CD4-positive, alpha-beta memory T cell (primary cell): ENCODE measurements at regions of chr2 and their contacts with region 1.

Region 1: GRCh38 chr2:231780909-231781797 is at the start of gene PDE6D:
- DNase-seq: peak; percentile 94 to 98 (median 94)
- H3K4me3 ChIP-seq: peak within 1 kb of the TSS; percentile 91 to 96
- H3K4me3 Mint-ChIP-seq: peak within 1 kb of the TSS; percentile 97 to 100 (median 98)
- H3K27ac ChIP-seq: peak within 1 kb of the TSS; percentile 91
- H3K27ac Mint-ChIP-seq: peak within 1 kb of the TSS; percentile 96 to 99 (median 97)
- H3K4me1 ChIP-seq: peaks cover 48% of the 10 kb centered on the region
- H3K4me1 Mint-ChIP-seq: peaks cover 42 to 79% (median 52%) of the 10 kb centered on the region in 4 donors
- H3K27me3 ChIP-seq: no peaks in the 10 kb centered on the region
- H3K27me3 Mint-ChIP-seq: no peaks in the 10 kb centered on the region
- total RNA-seq, gene PDE6D: 29.1 to 30.5 TPM

Region 2: GRCh38 chr2:231463698-231464575 is 317.2 kb before region 1 on chr2 and contains the start of gene NCL:
- CTCF ChIA-PET with region 1: no interaction called
- POLR2A ChIA-PET with region 1: interaction called, 6 read pairs
- intact Hi-C with region 1: loop called (anchors 2 kb)
- DNase-seq: peak; percentile 90 to 96 (median 92)
- H3K4me3 ChIP-seq: peak within 1 kb of the TSS; percentile 77 to 92
- H3K4me3 Mint-ChIP-seq: peak within 1 kb of the TSS; percentile 92 to 98 (median 96)
- H3K27ac ChIP-seq: peak within 1 kb of the TSS; percentile 96
- H3K27ac Mint-ChIP-seq: peak within 1 kb of the TSS; percentile 99 to 100 (median 99)
- H3K4me1 ChIP-seq: peaks cover 51% of the 10 kb centered on the region
- H3K4me1 Mint-ChIP-seq: peaks cover 31 to 59% (median 45%) of the 10 kb centered on the region in 4 donors
- H3K27me3 ChIP-seq: no peaks in the 10 kb centered on the region
- H3K27me3 Mint-ChIP-seq: peaks cover 0 to 3% of the 10 kb centered on the region in 2 donors
- total RNA-seq, gene NCL: 380 to 390 TPM

Region 3: DNA sequence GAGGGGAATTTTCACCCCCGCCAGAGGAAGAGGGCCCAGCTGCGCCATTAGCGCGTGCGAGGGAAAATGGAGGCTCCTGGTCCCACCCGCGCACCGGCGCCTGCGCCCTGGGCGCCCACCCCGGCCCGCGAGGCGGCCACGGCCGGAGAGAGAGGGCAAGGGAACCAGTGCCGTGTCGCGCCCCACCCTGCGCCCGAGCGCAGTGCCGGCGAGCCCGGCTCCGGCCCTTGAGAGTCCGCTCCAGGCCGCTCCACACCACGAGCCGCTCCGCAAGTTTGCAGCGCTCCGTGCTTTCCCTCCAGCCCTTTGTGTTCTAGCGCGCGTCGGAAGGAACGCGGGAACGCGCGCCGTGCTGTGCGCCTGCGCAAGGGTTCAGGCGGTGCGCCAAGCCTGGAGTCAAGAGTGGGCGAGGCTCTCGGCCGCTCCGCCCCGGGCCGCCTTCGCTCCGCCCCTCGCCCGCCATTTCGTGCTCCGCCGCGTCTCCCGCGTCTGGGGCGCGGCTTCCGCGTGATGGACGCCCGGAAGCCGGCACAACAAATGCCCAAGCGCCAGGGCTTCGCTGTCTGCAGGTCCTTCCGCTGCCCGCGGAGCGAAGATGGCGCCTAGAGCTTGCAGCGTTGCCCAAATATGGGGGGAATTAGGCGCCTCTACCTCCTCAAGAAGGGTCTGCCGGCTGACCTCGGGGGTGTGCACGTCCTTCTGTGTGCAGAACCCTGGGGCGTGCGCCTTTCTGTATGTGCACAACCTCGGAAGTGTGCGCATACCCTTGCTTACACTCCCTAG is 118.9 kb before region 1 on chr2:
- CTCF ChIA-PET with region 1: no interaction called
- POLR2A ChIA-PET with region 1: interaction called, 4 read pairs
- intact Hi-C with region 1: loop called (anchors 1 kb)
- DNase-seq: peak; percentile 93 to 99 (median 99)
- H3K4me3 ChIP-seq: peak overlapping the region; percentile 43 to 60
- H3K4me3 Mint-ChIP-seq: peak overlapping the region; percentile 75 to 86 (median 80)
- H3K27ac ChIP-seq: peak overlapping the region; percentile 86
- H3K27ac Mint-ChIP-seq: peak overlapping the region; percentile 90 to 99 (median 97)
- H3K4me1 ChIP-seq: peaks cover 14% of the 10 kb centered on the region
- H3K4me1 Mint-ChIP-seq: peaks cover 5 to 23% (median 13%) of the 10 kb centered on the region in 4 donors
- H3K27me3 ChIP-seq: no peaks in the 10 kb centered on the region
- H3K27me3 Mint-ChIP-seq: no peaks in the 10 kb centered on the region

Region 4: DNA sequence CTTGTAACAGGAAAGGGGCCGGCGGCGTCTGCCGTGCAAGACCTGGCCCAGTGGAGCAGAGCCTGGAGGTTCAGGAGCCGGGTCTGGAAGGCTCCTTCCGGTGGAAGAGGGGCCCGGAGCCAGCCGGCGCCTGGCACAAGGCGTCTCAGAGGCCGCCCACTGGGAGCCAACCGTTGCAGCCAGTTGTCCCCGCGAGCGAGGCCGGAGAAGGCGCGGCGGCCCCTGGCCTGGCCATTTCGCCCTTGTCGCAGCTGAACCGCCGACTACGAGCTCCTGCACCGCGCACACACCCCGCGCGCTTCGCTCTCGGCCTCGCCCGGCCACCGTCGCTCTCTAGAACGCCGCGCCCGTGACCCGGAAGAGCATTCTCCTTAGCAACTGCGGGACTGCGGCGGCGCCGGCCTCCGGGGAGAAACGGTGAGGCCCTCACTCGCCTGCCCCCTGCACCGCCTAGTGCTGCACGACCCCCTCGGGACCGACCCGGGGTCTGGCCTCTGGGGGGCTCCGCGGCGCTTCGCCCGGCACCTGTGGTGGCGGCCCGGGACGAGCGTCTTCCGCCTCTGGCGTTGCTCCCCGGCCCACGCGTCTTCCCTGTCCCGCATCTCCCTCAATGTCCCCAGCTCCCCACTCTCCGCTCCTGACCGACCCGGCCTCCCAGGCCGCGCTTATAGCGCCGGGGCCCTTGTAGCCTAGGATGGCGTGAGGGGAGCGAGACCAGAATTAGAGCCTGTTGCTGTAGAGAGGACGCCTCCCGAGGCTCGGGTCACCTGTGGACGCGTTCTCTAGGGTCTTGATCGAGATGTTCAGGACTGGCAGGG is 180.4 kb after region 1 on chr2 and contains the start of gene DIS3L2:
- CTCF ChIA-PET with region 1: no interaction called
- POLR2A ChIA-PET with region 1: no interaction called
- intact Hi-C with region 1: loop called (anchors 1 kb)
- DNase-seq: peak; percentile 76 to 81 (median 80)
- H3K4me3 ChIP-seq: peak within 1 kb of the TSS; percentile 81 to 98
- H3K4me3 Mint-ChIP-seq: peak within 1 kb of the TSS; percentile 93 to 98 (median 96)
- H3K27ac ChIP-seq: peak within 1 kb of the TSS; percentile 51
- H3K27ac Mint-ChIP-seq: peak within 1 kb of the TSS; percentile 92 to 97 (median 93)
- H3K4me1 ChIP-seq: peaks cover 14% of the 10 kb centered on the region
- H3K4me1 Mint-ChIP-seq: peaks cover 29 to 53% (median 37%) of the 10 kb centered on the region in 4 donors
- H3K27me3 ChIP-seq: no peaks in the 10 kb centered on the region
- H3K27me3 Mint-ChIP-seq: peaks cover 0 to 5% of the 10 kb centered on the region in 2 donors
- total RNA-seq, gene DIS3L2: 56.0 to 59.7 TPM

Region 5: GRCh38 chr2:232097260-232097659 is 316.1 kb after region 1 on chr2:
- CTCF ChIA-PET with region 1: no interaction called
- POLR2A ChIA-PET with region 1: no interaction called
- intact Hi-C with region 1: no loop called
- DNase-seq: no peak
- H3K4me3 ChIP-seq: no peak overlapping the region
- H3K4me3 Mint-ChIP-seq: no peak overlapping the region
- H3K27ac ChIP-seq: no peak overlapping the region
- H3K27ac Mint-ChIP-seq: peak overlapping the region in 2 of 7 donors; percentile 70 to 73
- H3K4me1 ChIP-seq: no peaks in the 10 kb centered on the region
- H3K4me1 Mint-ChIP-seq: peaks cover 3 to 18% (median 15%) of the 10 kb centered on the region in 4 donors
- H3K27me3 ChIP-seq: no peaks in the 10 kb centered on the region
- H3K27me3 Mint-ChIP-seq: no peaks in the 10 kb centered on the region

Region 6: DNA sequence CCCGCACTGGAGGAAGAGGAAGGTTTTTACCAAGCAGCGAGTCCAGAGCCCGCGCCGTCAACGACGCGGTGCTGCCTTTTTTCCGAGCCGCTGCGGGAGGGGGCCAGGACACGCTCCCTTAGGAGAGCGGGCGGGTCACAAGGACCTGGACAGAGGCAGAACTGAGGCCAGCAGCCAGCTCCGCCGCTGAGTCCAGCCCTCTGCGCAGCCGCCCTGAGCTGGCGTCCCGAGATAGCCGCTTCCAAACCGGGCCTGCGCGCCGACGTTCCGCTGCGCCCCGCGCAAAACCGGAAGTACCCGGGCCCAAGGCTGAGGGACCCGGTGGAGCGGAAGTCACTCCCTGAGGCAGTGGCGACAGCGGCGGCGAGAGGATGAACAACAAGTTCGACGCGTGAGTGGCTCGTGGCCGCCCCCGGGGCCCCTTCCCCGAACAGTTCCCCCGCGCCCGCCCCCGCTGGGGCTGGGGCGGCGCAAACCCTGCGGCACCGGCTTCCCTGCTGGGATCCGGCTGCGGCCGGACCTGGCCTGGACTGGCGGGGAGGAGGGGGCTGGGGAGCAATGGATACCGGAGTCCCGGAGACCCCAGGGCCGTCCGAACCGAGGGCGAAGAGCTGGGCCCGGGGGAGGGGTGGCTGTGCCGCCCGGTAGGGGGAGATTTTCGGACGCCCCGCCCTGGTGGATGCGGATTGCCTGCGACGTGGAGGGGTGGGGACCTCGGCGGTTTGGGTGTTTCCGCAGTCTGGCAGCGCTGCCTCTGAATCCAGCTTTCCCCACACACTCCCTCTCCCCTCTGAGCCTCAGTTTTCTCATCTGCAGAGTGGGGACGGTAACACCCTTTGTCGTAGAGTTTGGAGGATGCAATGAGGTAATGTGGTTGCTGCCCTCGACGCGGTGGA is 769.4 kb after region 1 on chr2 and contains the starts of genes EIF4E2 and TIGD1:
- CTCF ChIA-PET with region 1: no interaction called
- POLR2A ChIA-PET with region 1: no interaction called
- intact Hi-C with region 1: loop called (anchors 1 kb)
- DNase-seq: peak; percentile 87 to 92 (median 88)
- H3K4me3 ChIP-seq: peak within 1 kb of the TSS; percentile 79 to 80
- H3K4me3 Mint-ChIP-seq: peak within 1 kb of the TSS; percentile 99 to 100 (median 100)
- H3K27ac ChIP-seq: peak within 1 kb of the TSS; percentile 94
- H3K27ac Mint-ChIP-seq: peak within 1 kb of the TSS; percentile 96 to 100 (median 99)
- H3K4me1 ChIP-seq: peaks cover 77% of the 10 kb centered on the region
- H3K4me1 Mint-ChIP-seq: peaks cover 60 to 91% (median 80%) of the 10 kb centered on the region in 4 donors
- H3K27me3 ChIP-seq: no peaks in the 10 kb centered on the region
- H3K27me3 Mint-ChIP-seq: no peaks in the 10 kb centered on the region
- total RNA-seq, gene EIF4E2: 72.4 to 75.5 TPM
- total RNA-seq, gene TIGD1: 18.9 to 19.3 TPM